CD14-positive monocyte (primary cell): ENCODE measurements at regions of chr2 and their contacts with region 1.

Region 1: GRCh38 chr2:37231241-37232130 is at the starts of genes CEBPZ and NDUFAF7:
- DNase-seq: peak; percentile 87 to 88 (median 88)
- H3K4me3 ChIP-seq: peak within 1 kb of the TSS; percentile 70 to 96 (median 87)
- H3K4me3 Mint-ChIP-seq: no peak within 1 kb of the TSS
- H3K27ac ChIP-seq: peak within 1 kb of the TSS; percentile 86 to 96
- H3K27ac Mint-ChIP-seq: no peak within 1 kb of the TSS
- H3K4me1 ChIP-seq: peaks cover 23 to 27% of the 10 kb centered on the region in 2 donors
- H3K4me1 Mint-ChIP-seq: no peaks in the 10 kb centered on the region
- H3K27me3 ChIP-seq: no peaks in the 10 kb centered on the region
- H3K27me3 Mint-ChIP-seq: no peaks in the 10 kb centered on the region
- CTCF ChIP-seq: no peak
- polyA plus RNA-seq, gene CEBPZ: 5.7 to 11.2 (median 11.1) TPM
- polyA plus RNA-seq, gene NDUFAF7: 4.7 to 12.2 (median 5.6) TPM

Region 2: DNA sequence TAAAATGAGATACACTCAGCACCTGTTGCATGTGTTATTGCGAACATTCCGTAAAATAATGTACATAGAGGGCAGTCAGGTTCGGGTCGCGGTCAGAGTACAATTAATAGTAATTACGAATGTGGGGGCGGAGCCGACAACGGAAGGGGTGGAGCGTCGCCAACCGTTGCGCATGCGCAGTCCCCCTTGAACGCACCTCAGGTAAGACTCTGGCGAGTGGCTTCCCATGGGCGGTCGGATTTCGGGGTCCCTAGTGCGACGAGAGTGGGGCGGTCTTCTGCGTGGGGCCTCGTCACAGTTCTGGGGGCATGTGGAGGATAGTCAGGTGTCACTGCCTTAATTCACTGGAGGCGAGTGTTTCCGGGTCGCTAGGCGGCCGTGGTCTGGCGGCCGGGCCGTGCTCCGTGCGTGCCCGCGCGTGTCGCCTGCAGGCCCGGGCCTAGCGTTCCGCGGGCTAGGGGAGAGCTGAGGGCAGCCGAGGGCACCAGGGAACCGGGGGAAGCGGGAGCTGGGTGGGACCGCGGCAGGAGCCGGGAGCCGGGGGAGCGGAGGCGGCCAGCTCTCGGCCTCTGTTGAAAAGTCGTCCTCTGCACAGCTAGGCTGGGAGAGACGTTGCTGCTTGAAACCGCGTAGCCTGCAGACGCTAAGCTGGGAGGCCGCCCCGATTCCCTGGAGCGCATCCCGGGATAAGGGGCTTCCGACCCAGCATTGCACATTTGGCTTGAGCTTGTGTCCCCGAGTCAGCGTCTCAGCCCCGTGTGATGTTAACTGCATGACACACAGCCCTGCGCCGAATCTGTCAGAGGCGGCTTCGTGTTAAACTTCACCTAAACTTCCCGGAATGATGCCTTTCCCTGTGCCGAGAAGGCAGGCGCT is 34.9 kb before region 1 on chr2 and contains the start of gene CEBPZOS:
- intact Hi-C with region 1: loop called (anchors 5 kb)
- DNase-seq: peak; percentile 76 to 81 (median 80)
- H3K4me3 ChIP-seq: peak within 1 kb of the TSS; percentile 78 to 94 (median 85)
- H3K4me3 Mint-ChIP-seq: peak within 1 kb of the TSS; percentile 95 to 98
- H3K27ac ChIP-seq: peak within 1 kb of the TSS; percentile 63 to 96
- H3K27ac Mint-ChIP-seq: peak within 1 kb of the TSS; percentile 90 to 100 (median 99)
- H3K4me1 ChIP-seq: peaks cover 9 to 21% of the 10 kb centered on the region in 2 donors
- H3K4me1 Mint-ChIP-seq: peaks cover 11% of the 10 kb centered on the region
- H3K27me3 ChIP-seq: no peaks in the 10 kb centered on the region
- H3K27me3 Mint-ChIP-seq: no peaks in the 10 kb centered on the region
- CTCF ChIP-seq: no peak
- polyA plus RNA-seq, gene CEBPZOS: 12.6 to 19.3 (median 18.2) TPM

Region 3: DNA sequence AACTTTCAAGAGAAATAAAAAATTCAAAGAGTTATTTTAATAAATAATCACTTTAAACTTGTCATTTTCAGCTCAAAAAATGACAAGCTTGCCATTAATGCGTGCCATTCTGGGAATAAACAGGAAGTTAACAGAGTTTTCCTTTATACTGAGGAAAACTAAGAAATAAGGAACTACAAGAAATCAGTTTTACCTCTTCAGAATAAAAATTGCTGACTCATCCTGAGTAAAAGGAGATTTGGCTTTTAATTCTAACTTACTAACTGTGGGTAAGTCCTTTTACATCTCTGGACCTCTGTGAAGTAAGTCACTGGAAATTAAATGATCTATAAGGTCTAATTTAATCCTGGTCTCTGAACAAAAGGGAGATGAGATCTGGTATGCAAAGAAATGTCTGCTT is 16.2 kb before region 1 on chr2:
- intact Hi-C with region 1: loop called in 1 of 2 experiments (anchors 1 kb)
- DNase-seq: peak in 2 of 3 donors; percentile 14 to 26
- H3K4me3 ChIP-seq: no peak overlapping the region
- H3K4me3 Mint-ChIP-seq: no peak overlapping the region
- H3K27ac ChIP-seq: peak overlapping the region in 1 of 2 donors; percentile 38
- H3K27ac Mint-ChIP-seq: no peak overlapping the region
- H3K4me1 ChIP-seq: peaks cover 3 to 7% of the 10 kb centered on the region in 2 donors
- H3K4me1 Mint-ChIP-seq: peaks cover 3% of the 10 kb centered on the region
- H3K27me3 ChIP-seq: no peaks in the 10 kb centered on the region
- H3K27me3 Mint-ChIP-seq: no peaks in the 10 kb centered on the region
- CTCF ChIP-seq: no peak